ENCODE measurements at regions of chr2 and their contacts with region 1.

Region 1: DNA sequence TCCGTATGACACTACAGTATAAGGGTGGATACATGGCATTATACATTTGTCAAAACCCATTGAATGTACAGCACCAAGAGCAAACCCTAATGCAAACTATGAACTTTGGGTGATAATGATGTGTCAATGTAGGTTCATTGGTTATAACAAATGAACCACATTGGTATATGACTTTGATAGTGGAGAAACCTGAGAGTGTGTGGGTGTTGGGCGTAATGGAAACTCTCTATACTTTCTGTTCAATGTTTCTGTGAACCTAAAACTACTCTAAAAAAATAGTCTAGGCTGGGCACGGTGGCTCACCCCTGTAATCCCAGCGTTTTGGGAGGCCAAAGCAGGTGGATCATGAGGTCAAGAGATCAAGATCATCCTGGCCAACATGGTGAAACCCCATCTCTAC is 6.5 kb upstream of the ACTG2 start:
- DNase-seq: no peak
- H3K4me3 Mint-ChIP-seq: peak overlapping the region; percentile 12
- H3K27ac Mint-ChIP-seq: peak overlapping the region; percentile 82
- H3K4me1 Mint-ChIP-seq: peaks cover 24% of the 10 kb centered on the region
- H3K27me3 Mint-ChIP-seq: peaks cover 3% of the 10 kb centered on the region

Region 2: DNA sequence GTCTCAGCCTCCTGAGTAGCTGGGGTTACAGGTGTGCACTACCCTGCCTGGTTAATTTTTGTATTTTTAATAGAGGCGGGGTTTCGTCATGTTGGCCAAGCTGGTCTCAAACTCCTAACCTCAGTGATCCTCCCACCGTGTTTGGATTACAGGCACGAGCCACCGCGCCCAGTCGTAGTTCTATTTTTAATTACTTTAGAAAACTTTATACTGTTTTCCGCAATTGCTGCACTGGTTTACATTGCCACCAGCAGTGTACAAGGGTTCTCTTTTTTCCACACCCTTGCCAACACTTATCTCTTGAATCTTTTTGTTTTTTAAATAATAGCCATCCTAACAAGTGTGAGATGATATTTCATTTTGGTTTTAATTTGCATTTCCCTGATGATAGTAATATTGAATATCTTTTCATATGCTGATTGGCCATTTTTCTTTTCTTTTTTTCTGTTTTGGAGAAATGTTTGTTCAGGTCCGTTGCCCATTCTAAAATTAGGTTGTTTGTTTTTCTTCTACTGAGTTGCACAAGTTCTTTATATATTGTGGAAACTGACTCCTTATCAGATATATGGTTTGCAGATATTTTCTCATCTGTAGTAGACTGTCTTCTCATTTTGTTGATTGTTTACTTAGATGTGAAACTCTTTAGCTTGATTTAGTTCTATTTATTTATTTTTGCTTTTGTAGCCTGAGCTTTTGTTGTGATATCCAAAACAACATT is 483.8 kb before region 1 on chr2:
- intact Hi-C with region 1: no loop called
- DNase-seq: no peak
- H3K4me3 Mint-ChIP-seq: no peak overlapping the region
- H3K27ac Mint-ChIP-seq: no peak overlapping the region
- H3K4me1 Mint-ChIP-seq: peaks cover 4% of the 10 kb centered on the region
- H3K27me3 Mint-ChIP-seq: no peaks in the 10 kb centered on the region

Region 3: GRCh38 chr2:73859721-73860586 is 26.4 kb before region 1 on chr2:
- intact Hi-C with region 1: loop called (anchors 1 kb)
- DNase-seq: peak; percentile 62
- H3K4me3 Mint-ChIP-seq: no peak overlapping the region
- H3K27ac Mint-ChIP-seq: peak overlapping the region; percentile 70
- H3K4me1 Mint-ChIP-seq: peaks cover 31% of the 10 kb centered on the region
- H3K27me3 Mint-ChIP-seq: no peaks in the 10 kb centered on the region

Region 4: DNA sequence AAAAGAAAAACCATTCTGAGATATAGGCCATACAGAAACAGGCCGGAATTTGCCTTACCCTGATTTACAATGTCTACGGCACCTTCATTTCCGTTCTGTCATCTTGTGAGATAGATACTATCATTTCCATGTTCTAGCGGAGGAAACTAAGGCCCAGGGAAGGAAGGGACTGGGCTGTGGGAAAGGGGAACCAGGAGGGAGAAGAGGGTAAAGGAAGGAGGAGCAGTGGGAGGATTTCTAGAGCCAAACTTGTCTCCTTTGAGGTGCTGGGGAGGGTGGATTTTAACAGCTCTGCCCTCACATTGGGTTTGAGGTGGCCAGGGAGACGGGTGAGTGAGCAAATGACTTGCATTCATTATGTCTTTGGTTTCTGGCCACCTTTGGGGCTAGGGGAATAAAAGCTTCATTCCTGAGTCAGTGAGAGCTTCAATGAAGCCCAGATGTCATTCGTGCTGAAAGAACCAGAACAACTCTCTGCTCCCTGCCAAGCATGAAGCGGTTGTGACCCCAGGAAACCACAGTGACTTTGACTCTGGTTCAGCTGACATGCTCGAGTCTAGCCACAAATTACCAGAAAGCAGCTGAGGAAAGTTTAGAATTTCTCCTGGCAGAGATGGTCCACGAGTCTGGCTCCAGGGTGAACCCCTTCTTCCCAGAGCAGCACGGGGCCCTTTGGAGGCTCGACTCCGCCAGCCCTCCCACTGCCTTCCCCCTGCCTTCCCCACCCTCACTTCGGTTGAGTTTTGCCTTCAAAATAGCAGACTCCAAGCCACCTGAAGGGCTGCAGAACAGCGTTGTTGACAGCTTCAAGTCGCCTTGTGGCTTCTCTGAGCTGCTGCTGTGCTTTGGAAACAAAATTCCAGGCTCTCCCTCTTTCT is 10.2 kb after region 1 on chr2:
- intact Hi-C with region 1: loop called (anchors 1 kb)
- DNase-seq: peak; percentile 84
- H3K4me3 Mint-ChIP-seq: peak overlapping the region; percentile 51
- H3K27ac Mint-ChIP-seq: peak overlapping the region; percentile 85
- H3K4me1 Mint-ChIP-seq: peaks cover 35% of the 10 kb centered on the region
- H3K27me3 Mint-ChIP-seq: no peaks in the 10 kb centered on the region

Region 5: GRCh38 chr2:73931531-73932500 is 45.5 kb after region 1 on chr2:
- intact Hi-C with region 1: loop called (anchors 1 kb)
- DNase-seq: peak; percentile 72
- H3K4me3 Mint-ChIP-seq: peak overlapping the region; percentile 73
- H3K27ac Mint-ChIP-seq: peak overlapping the region; percentile 95
- H3K4me1 Mint-ChIP-seq: peaks cover 62% of the 10 kb centered on the region
- H3K27me3 Mint-ChIP-seq: no peaks in the 10 kb centered on the region

Region 6: GRCh38 chr2:73979686-73980085 is 93.3 kb after region 1 on chr2:
- intact Hi-C with region 1: loop called (anchors 1 kb)
- DNase-seq: peak; percentile 58
- H3K4me3 Mint-ChIP-seq: peak overlapping the region; percentile 65
- H3K27ac Mint-ChIP-seq: peak overlapping the region; percentile 78
- H3K4me1 Mint-ChIP-seq: peaks cover 68% of the 10 kb centered on the region
- H3K27me3 Mint-ChIP-seq: peaks cover 9% of the 10 kb centered on the region